Spleen (tissue), 13 donors: ENCODE measurements at regions of chr1 and their contacts with region 1.

Region 1: GRCh38 chr1:152878042-152878441 is at the start of gene SMCP:
- DNase-seq: no peak
- H3K4me3 ChIP-seq: no peak within 1 kb of the TSS
- H3K27ac ChIP-seq: no peak within 1 kb of the TSS
- H3K4me1 ChIP-seq: no peaks in the 10 kb centered on the region
- H3K27me3 ChIP-seq: peaks cover 0 to 15% (median 0%) of the 10 kb centered on the region in 7 donors
- CTCF ChIP-seq: no peak
- POLR2A ChIP-seq: no peak
- total RNA-seq, gene SMCP: not detected

Region 2: DNA sequence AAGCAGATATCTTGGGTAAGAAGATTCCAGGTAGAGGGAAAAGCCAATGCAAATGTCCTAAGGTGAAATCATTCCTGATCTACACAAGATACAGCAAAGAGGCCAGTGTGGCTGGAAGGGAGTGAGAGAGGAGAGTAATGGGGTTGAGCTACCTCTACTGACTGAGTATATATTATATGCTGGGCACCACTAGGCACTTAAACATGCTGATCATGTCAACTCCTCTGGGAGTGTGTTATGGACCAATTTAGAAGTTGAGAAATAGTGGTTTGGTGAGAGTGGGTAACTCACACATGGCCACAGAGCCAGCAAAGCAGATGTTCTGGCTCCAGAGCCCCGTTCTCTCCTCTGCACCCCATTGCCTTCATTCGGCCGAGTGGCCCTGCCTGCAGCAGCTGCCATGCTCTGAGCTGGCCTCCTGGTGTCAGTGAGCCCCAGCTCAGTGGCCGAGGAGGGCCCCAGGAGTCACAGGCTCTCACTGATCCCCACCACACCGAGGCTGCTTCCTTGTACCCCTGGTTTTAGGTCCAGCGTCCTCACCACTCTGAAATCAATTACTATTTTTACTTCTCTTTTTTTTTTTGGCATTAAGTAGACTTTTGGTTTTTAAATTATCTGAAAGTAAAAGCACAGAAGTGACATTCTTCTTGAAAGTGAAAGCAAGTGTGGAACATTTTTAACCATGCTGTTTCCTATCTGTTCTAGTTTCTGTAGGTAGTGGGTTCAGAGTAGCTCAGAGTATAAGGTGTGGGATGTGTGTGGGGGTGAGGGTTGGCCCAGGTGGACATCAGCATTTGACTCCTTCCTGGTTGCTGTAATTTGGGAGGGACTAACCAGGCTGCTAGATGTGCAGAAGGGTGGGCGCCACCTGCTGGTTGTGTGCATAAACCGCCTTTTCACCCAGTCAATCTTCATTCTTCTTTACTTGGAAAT is 418.2 kb before region 1 on chr1:
- intact Hi-C with region 1: no loop called
- DNase-seq: peak; percentile 89
- H3K4me3 ChIP-seq: peak overlapping the region in 2 of 8 donors; percentile 9 to 41
- H3K27ac ChIP-seq: peak overlapping the region; percentile 48 to 83 (median 79)
- H3K4me1 ChIP-seq: peaks cover 0 to 26% (median 13%) of the 10 kb centered on the region in 6 donors
- H3K27me3 ChIP-seq: no peaks in the 10 kb centered on the region
- CTCF ChIP-seq: peak; percentile 41 to 84 (median 69)
- POLR2A ChIP-seq: no peak

Region 3: DNA sequence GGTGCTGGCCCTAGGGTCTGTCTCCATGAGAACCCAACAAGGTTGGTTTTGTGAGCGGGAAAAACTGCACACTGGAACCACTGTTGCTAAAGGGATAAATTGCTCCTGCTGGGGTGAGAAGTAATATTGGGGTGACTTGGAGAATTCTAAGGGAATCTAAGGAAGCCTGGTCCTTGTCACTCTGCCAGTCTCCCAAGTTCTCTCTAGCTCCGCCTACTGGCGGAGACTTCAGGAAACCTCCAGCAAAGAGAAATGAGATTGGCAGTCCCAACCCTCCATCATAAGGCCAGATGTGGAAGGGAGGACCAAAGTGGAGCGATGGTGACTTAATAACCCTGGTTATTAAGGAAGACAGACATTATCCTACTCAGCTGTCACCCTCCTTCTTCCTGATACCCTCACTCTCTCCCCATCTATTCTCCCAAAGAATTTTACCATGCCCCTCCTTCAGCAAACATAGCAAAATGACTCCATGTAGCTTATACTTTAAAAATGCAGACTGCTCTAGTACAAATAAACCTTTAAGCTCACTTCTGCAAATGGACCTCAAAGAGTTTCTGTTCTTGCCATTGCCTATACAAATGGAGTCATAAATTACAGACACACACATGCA is 100.4 kb before region 1 on chr1:
- intact Hi-C with region 1: no loop called
- DNase-seq: no peak
- H3K4me3 ChIP-seq: no peak overlapping the region
- H3K27ac ChIP-seq: no peak overlapping the region
- H3K4me1 ChIP-seq: no peaks in the 10 kb centered on the region
- H3K27me3 ChIP-seq: peaks cover 0 to 28% (median 0%) of the 10 kb centered on the region in 7 donors
- CTCF ChIP-seq: no peak
- POLR2A ChIP-seq: no peak

Region 4: DNA sequence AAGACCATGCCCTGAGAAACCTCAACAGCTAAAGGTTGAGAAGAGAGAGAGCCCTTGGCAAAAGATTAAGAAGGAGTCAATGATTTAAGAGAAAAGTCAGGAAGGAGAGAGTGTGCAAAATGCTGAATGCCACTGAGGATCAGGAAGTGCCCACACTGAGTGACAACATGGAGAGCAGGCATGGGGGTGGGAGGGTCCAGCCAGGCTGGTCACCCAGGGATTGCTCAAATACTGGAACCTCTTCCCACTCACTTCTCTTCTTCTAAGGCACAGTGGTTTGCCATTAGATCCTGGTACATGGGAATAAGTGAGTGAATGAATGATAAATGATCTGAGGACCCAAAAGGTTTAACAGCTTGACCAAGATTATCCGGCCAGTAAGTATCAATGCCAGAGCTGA is 350.4 kb after region 1 on chr1:
- intact Hi-C with region 1: loop called (anchors 5 kb)
- DNase-seq: no peak
- H3K4me3 ChIP-seq: no peak overlapping the region
- H3K27ac ChIP-seq: no peak overlapping the region
- H3K4me1 ChIP-seq: peaks cover 0 to 28% (median 0%) of the 10 kb centered on the region in 6 donors
- H3K27me3 ChIP-seq: peaks cover 0 to 29% (median 4%) of the 10 kb centered on the region in 7 donors
- CTCF ChIP-seq: no peak
- POLR2A ChIP-seq: no peak